ENCODE measurements at regions of chr17 and their contacts with region 1.

Region 1: GRCh38 chr17:11948789-11949188 is 48.5 kb downstream of the ZNF18 start:
- DNase-seq: peak; percentile 78
- H3K4me3 ChIP-seq: no peak overlapping the region
- H3K27ac ChIP-seq: no peak overlapping the region
- H3K4me1 ChIP-seq: peaks cover 42% of the 10 kb centered on the region
- H3K27me3 ChIP-seq: no peaks in the 10 kb centered on the region
- CTCF ChIP-seq: no peak

Region 2: GRCh38 chr17:11969565-11969964 is 20.8 kb after region 1 on chr17:
- CTCF ChIA-PET with region 1: no interaction called
- dilution Hi-C with region 1: no loop called
- in situ Hi-C with region 1: no loop called
- intact Hi-C with region 1: loop called (anchors 2 kb)
- DNase-seq: peak; percentile 85
- H3K4me3 ChIP-seq: no peak overlapping the region
- H3K27ac ChIP-seq: peak overlapping the region; percentile 16
- H3K4me1 ChIP-seq: peaks cover 19% of the 10 kb centered on the region
- H3K27me3 ChIP-seq: no peaks in the 10 kb centered on the region
- CTCF ChIP-seq: no peak

Region 3: DNA sequence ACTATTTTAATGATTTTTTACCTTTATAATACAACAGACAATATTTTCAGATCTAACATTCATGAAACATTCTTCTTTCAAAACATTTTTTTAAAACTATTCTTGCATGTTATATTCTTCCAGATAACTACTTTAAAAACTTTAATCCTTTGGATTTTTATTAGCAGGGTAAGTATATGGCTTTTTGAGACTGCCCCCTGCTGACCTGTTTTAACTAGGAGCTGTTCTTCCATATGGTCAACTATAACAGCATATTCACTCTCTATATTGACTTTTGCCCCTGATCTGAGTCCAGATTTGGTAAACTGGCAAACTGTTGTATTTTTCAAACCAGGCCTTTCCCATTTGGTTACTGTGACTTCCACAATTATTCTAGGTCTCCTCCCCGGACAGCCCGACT is 32.0 kb after region 1 on chr17:
- CTCF ChIA-PET with region 1: no interaction called
- dilution Hi-C with region 1: no loop called
- in situ Hi-C with region 1: no loop called
- intact Hi-C with region 1: loop called (anchors 2 kb)
- DNase-seq: no peak
- H3K4me3 ChIP-seq: no peak overlapping the region
- H3K27ac ChIP-seq: no peak overlapping the region
- H3K4me1 ChIP-seq: no peaks in the 10 kb centered on the region
- H3K27me3 ChIP-seq: no peaks in the 10 kb centered on the region
- CTCF ChIP-seq: peak; percentile 51 to 62

Region 4: GRCh38 chr17:12133183-12133582 is 184.4 kb after region 1 on chr17:
- CTCF ChIA-PET with region 1: no interaction called
- dilution Hi-C with region 1: no loop called
- in situ Hi-C with region 1: no loop called
- intact Hi-C with region 1: no loop called
- DNase-seq: no peak
- H3K4me3 ChIP-seq: no peak overlapping the region
- H3K27ac ChIP-seq: no peak overlapping the region
- H3K4me1 ChIP-seq: no peaks in the 10 kb centered on the region
- H3K27me3 ChIP-seq: no peaks in the 10 kb centered on the region
- CTCF ChIP-seq: no peak